Ascending aorta (tissue), 2 donors: ENCODE measurements at regions of chr3 and their contacts with region 1.

Region 1: GRCh38 chr3:141231101-141231935 is at the start of gene PXYLP1:
- DNase-seq: peak; percentile 77 to 97
- H3K4me3 ChIP-seq: peak within 1 kb of the TSS; percentile 61 to 96
- H3K27ac ChIP-seq: peak within 1 kb of the TSS; percentile 79 to 85
- H3K4me1 ChIP-seq: peaks cover 0 to 11% of the 10 kb centered on the region in 2 donors
- H3K27me3 ChIP-seq: no peaks in the 10 kb centered on the region
- CTCF ChIP-seq: peak; percentile 27 to 97 (median 46)
- total RNA-seq, gene PXYLP1: 14.2 TPM

Region 2: GRCh38 chr3:140941434-140942220 is 289.7 kb before region 1 on chr3 and contains the start of gene SLC25A36:
- intact Hi-C with region 1: loop called (anchors 5 kb)
- DNase-seq: peak; percentile 92 to 98
- H3K4me3 ChIP-seq: peak within 1 kb of the TSS; percentile 73 to 99
- H3K27ac ChIP-seq: peak within 1 kb of the TSS; percentile 99
- H3K4me1 ChIP-seq: peaks cover 0 to 15% of the 10 kb centered on the region in 2 donors
- H3K27me3 ChIP-seq: no peaks in the 10 kb centered on the region
- CTCF ChIP-seq: peak in 1 of 3 experiments; percentile 4
- total RNA-seq, gene SLC25A36: 19.1 TPM

Region 3: DNA sequence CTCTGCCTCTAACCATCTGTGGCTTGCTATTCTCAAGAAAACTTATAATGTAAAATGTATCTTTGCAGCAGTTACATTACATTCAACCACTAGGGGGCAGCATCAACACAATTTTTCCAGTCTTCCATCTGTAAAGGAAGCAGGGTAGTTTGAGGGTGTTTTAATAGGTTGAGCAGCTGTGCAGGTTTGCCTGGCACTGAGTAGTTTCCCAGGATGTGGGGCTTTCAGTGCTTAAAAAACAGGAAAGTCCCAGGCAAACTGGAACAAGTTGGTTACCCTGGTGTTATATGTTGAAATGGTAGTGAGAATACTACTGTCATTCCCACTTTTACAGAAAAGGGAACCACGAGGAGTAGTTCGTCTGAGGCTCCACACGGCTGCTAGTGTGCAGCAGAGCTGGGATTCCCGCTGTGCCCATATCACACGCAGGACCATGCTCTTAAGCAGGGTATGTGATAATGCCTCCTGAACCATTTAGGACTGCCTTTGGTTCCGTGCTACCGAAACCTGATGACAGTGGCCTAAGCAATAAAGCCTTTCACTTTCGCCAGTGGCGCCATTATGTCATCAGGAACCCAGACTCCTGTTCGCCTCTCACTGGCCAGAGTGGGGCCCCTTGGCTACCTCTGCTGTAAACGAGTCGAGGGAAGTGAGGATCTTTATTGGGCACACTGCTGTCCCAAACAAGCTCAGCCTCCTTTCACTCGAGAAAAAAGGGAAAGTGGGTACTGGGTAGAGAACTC is 72.3 kb after region 1 on chr3:
- intact Hi-C with region 1: loop called (anchors 2 kb)
- DNase-seq: no peak
- H3K4me3 ChIP-seq: no peak overlapping the region
- H3K27ac ChIP-seq: no peak overlapping the region
- H3K4me1 ChIP-seq: no peaks in the 10 kb centered on the region
- H3K27me3 ChIP-seq: no peaks in the 10 kb centered on the region
- CTCF ChIP-seq: peak; percentile 65 to 79 (median 74)

Region 4: DNA sequence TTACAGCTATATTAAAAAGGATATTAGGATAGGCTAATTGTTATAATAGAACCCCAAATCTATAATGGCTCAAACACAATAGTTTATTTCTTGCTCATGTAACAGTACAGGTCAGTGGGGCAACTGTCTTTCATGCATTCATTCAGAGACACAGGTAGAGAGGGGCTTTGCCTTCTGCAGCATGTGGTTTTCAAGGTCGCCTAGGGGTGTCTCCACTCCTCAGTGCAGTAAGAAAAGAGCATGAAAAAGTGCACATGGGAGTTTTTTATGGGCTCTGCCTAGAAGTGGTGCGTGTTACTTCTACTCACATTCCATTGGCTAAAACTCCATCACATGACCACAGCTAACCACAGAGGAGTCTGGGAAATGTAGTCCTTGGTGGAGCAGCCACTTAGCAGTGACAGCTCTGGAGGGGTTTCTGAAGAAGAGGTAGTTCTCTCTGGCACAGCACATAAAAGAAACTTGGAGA is 138.8 kb after region 1 on chr3:
- intact Hi-C with region 1: loop called (anchors 2 kb)
- DNase-seq: peak; percentile 26 to 83
- H3K4me3 ChIP-seq: peak overlapping the region; percentile 52 to 61
- H3K27ac ChIP-seq: peak overlapping the region; percentile 98 to 99
- H3K4me1 ChIP-seq: peaks cover 6 to 37% of the 10 kb centered on the region in 2 donors
- H3K27me3 ChIP-seq: no peaks in the 10 kb centered on the region
- CTCF ChIP-seq: peak; percentile 29 to 60 (median 59)

Region 5: DNA sequence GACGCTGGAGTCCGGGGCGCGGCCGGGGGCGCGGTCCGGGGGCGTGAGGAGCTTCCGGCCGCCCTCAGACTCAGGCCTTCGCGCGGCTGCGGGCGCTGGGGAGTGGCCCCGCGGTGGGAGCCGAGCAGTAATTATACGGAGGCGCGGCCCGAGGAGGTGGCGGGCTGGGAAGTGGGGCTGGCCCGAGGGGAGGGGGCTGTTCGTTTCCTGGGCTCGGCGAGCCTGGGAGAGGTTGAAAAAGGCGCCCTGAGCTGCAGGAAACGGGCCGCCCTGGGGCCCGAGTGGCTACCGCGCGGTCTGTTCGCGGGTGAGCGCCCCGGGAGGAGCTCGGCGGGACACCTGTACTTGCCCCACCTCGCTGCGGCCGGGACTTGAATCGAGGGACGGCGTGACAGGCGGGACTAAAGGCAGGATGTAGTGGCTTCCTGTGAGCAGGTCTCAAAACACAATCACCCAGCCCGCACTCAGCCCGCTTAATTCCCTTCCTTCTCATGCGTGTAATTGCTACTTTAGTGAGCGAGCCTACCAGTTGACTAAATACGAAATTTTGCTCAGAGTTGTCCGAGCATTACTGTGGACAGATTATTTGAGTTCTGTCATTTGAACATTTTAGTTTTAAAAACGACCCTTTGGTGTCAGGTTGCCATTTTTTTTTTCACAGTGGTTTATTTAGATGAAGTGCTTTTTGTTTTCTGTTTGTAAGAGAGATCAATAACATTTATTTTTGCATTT is 256.4 kb after region 1 on chr3:
- intact Hi-C with region 1: loop called (anchors 5 kb)
- DNase-seq: peak; percentile 45 to 84
- H3K4me3 ChIP-seq: peak overlapping the region; percentile 87 to 88
- H3K27ac ChIP-seq: peak overlapping the region; percentile 88 to 95
- H3K4me1 ChIP-seq: peaks cover 3 to 8% of the 10 kb centered on the region in 2 donors
- H3K27me3 ChIP-seq: no peaks in the 10 kb centered on the region
- CTCF ChIP-seq: no peak